ENCODE measurements at regions of chr4 and their contacts with region 1.

Region 1: DNA sequence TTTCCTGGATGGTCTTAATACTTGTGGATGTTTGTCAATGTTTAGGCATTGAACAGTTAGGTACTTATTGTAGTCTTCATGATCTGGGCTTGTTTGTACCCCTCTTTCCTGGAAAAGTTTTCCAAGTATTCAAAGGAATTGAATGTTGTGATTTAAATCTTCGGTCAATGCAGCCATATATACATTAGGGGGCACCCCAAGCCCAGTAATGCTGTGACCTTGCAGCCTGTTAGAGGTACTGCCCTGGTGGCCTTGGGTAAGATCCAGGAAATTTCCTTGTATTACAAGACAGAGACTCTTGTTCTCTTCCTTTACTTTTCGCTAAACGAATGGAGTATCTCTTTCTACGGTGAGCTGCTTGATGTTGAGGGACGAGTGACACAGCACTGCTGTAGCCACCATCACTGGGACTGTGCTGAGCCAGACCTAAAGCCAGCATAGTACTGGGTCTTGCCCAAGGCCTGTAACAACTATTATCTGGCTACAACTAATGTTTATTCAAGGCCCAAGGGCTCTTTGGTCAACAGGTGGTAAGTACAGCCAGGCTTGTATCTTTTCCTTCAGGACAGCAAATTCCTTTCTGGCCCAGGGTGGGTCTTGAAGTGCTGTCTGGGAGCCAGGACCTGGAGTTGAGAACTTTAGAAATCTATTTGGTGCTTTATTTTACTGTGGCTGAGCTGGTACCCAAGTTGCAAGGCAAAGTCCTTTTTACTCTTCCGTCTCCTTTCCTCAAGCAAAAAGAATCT is 118.3 kb upstream of the ATOH1 start:
- DNase-seq: peak; percentile 49
- ATAC-seq: peak; percentile 54; the same call in 1 of the 2 replicates
- H3K4me3 ChIP-seq: no peak overlapping the region
- H3K27ac ChIP-seq: no peak overlapping the region
- H3K4me1 ChIP-seq: peaks cover 9% of the 10 kb centered on the region; the same call in 1 of the 2 replicates
- H3K27me3 ChIP-seq: no peaks in the 10 kb centered on the region
- CTCF ChIP-seq: peak; percentile 66

Region 2: DNA sequence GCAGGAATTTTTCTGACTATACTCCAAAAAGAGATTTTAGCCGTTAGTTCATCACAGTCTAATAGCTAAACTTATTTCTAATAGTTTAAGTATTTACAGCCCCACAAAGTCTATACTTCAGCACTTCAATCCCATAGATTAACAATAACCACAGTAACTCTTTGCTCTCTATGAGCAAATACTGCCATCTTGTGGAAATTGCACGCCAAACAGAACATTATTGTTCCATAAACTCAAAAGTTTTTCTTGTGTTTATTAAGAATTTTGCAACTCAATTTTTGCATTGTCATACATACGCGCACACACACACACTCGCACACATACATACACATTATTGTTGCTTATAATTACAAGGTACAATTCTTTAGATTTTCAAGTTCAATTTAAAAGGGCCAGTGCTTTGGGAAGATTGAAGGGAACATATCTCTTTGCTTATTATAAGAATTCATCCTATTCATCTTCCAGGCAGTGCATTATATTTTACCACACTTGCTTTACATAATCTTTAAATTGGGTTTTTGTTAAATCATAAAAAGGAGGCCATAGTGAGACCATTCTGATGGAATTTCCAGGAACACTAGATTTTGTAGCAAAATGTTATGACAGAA is 54.5 kb after region 1 on chr4:
- CTCF ChIA-PET with region 1: no interaction called
- POLR2A ChIA-PET with region 1: no interaction called
- intact Hi-C with region 1: loop called (anchors 1 kb)
- DNase-seq: peak; percentile 76
- ATAC-seq: peak; percentile 49; the same call in 1 of the 2 replicates
- H3K4me3 ChIP-seq: no peak overlapping the region
- H3K27ac ChIP-seq: no peak overlapping the region
- H3K4me1 ChIP-seq: no peaks in the 10 kb centered on the region
- H3K27me3 ChIP-seq: no peaks in the 10 kb centered on the region
- CTCF ChIP-seq: peak; percentile 77